ENCODE measurements at regions of chr12 and their contacts with region 1.

Region 1: GRCh38 chr12:6735448-6736191 is 11.8 kb downstream of the COPS7A start:
- DNase-seq: peak; percentile 61 to 83
- ATAC-seq: peak; percentile 93 to 98 (median 96)
- H3K4me3 ChIP-seq: peak overlapping the region; percentile 30
- H3K27ac ChIP-seq: peak overlapping the region; percentile 84
- H3K4me1 ChIP-seq: peaks cover 12% of the 10 kb centered on the region
- H3K27me3 ChIP-seq: no peaks in the 10 kb centered on the region
- CTCF ChIP-seq: peak; percentile 79

Region 2: GRCh38 chr12:6430124-6430989 is 305.3 kb before region 1 on chr12:
- intact Hi-C with region 1: no loop called
- DNase-seq: peak; percentile 83 to 89
- ATAC-seq: peak; percentile 77 to 92 (median 88)
- H3K4me3 ChIP-seq: peak overlapping the region; percentile 55
- H3K27ac ChIP-seq: peak overlapping the region; percentile 57
- H3K4me1 ChIP-seq: peaks cover 17% of the 10 kb centered on the region
- H3K27me3 ChIP-seq: no peaks in the 10 kb centered on the region
- CTCF ChIP-seq: no peak

Region 3: GRCh38 chr12:6778574-6779550 is 43.2 kb after region 1 on chr12:
- intact Hi-C with region 1: loop called (anchors 2 to 5 kb)
- DNase-seq: peak; percentile 94 to 97
- ATAC-seq: peak; percentile 98 to 99 (median 99)
- H3K4me3 ChIP-seq: peak overlapping the region; percentile 65
- H3K27ac ChIP-seq: peak overlapping the region; percentile 68
- H3K4me1 ChIP-seq: peaks cover 5% of the 10 kb centered on the region
- H3K27me3 ChIP-seq: peaks cover 0 to under 1% (median 0%) of the 10 kb centered on the region in 3 donors
- CTCF ChIP-seq: peak; percentile 96

Region 4: DNA sequence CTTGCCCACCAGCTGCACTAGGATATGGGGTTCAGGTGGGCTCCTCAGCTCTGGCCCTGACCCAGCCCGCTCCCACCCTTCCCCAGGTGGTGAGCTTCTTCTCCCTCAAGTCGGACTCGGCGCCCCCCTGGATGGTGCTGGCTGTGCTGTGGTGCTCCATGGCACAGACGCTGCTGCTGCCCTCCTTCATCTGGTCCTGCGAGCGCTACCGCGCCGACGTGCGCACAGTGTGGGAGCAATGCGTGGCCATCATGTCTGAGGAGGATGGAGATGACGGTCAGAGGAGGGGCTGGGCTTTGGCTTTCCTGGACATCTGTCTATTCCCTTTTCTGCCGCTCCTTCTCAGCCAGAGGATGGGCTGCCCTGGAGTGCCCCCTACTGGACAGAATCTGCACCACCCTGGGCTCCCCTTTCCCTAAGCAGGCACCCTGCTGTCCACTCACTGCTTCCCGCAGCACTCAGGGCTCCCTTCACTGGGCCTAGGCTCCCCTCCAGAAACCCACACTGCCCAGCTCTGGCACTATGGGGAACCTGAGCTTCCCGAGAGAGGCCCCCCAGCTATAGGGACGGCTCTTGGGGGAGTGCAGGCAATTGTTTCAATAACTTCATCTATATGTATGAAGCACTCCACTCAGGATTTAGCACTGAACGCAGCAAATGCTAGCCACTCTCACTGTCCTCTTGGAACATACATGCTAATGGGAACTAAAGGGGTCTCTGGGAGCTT is 89.9 kb after region 1 on chr12:
- intact Hi-C with region 1: loop called in 1 of 2 experiments (anchors 2 kb)
- DNase-seq: peak; percentile 83 to 89
- ATAC-seq: peak; percentile 79 to 83 (median 82)
- H3K4me3 ChIP-seq: no peak overlapping the region
- H3K27ac ChIP-seq: no peak overlapping the region
- H3K4me1 ChIP-seq: peaks cover 3% of the 10 kb centered on the region
- H3K27me3 ChIP-seq: peaks cover 0 to 70% (median 15%) of the 10 kb centered on the region in 3 donors
- CTCF ChIP-seq: peak; percentile 87

Measured in psoas muscle (tissue), 8 donors.